ENCODE measurements at regions of chr20 and their contacts with region 1.

Region 1: DNA sequence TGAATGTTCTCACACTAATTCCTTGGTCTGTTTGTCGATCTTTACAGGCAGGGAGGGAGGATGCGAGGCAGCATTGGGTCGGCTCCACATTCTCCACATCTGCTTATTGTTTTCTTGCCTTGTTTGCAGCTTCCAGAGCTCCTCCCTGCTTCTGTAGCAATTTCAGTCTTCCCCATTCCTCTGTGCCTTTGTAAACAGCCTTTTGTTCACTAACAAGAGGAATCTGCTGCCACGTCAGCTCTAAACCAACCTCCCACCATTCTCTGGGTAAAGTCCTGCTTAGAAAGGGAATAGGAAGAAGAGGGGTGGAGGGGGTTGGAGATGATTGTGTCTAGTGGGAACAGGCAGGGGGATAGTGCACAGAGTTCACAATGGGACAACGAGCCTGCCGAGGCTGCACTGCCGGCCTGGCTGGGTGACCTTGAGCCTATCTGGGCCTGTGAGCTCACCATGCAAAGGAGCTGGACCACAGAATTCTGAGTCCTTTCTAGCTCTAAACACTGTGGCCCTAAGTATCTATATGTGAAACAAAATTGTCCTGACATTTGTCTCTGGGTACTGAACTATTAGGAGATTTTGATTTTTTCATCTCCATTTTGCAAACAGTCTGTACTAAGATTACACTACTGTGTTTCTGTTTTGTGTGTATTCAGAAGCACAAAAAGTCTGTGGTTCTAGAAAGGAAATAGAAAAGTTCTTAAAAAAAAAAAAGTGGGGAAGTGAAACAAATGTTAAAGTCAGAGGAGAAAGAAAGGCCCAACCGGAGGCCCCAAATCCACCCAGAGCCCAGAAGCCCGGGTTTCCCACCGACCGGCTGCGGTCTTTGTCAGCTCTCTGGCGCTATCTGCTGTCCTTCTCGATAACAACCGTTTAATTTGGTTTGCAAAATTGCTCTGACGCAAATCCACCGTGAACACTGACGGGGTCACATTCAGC is 1.4 kb upstream of the PRND start:
- DNase-seq: peak; percentile 63 to 76 (median 65)
- ATAC-seq: peak; percentile 89
- H3K4me3 ChIP-seq: no peak overlapping the region
- H3K27ac ChIP-seq: no peak overlapping the region
- H3K4me1 ChIP-seq: no peaks in the 10 kb centered on the region
- H3K27me3 ChIP-seq: peaks cover 4 to 37% of the 10 kb centered on the region in 2 experiments; a peak in 3 of 5 replicates
- CTCF ChIP-seq: peak; percentile 70 to 84 (median 83)
- EP300 ChIP-seq: no peak
- POLR2A ChIP-seq: no peak
- RAD21 ChIP-seq: peak; percentile 87 to 93

Region 2: DNA sequence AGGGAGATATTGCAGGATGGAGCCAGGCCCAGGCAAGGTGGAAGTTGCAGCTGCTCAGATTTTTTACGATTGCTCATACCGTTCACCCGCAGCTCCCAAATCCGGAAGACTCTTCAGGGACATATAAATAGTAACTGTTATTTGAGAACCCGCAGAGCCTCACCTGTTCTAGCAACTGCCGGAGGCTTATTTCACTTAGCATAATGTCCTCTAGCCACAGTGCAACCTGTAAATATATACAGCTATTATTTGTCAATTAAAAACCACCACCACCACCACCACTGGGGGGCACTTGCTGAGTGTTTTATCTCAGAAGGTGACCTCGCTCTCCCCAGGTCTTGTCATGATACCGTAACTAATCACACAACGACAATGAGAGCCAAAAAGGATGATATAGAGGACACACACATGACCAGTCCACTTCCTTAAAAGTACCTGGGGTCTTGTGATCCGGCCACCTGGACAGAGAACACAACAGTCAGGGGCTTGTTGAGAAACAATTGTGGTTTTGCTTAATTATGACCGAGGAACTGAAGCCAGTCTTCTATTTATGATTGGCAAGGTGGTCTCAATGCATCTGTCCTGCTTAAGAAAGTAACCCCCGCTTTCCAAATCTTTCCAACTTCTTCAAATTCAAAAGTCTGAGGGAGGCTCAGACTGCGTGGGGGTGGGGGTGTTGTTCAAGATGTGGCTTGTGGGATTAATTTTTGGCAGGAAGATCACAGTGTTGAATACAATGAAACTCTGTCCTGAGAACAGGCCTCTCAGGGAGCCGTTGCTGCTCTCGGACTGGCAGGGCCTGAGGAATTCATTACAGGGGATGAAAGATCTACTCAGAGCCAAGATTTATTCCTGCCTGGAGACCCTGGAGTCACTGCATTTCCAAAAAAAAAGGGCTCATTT is 106.3 kb before region 1 on chr20:
- CTCF ChIA-PET with region 1: interaction called, 51 read pairs
- POLR2A ChIA-PET with region 1: no interaction called
- in situ Hi-C with region 1: loop called (anchors 5 kb)
- intact Hi-C with region 1: loop called (anchors 1 kb)
- DNase-seq: peak; percentile 25 to 60 (median 40)
- ATAC-seq: peak; percentile 86
- H3K4me3 ChIP-seq: no peak overlapping the region
- H3K27ac ChIP-seq: no peak overlapping the region
- H3K4me1 ChIP-seq: no peaks in the 10 kb centered on the region; a peak in 2 of 5 replicates
- H3K27me3 ChIP-seq: 0 out of 5 replicates have a peak, but pooled peaks cover 0 to 4% of the 10 kb centered on the region in 2 experiments
- CTCF ChIP-seq: peak; percentile 53 to 75 (median 70); a peak in 5 of 6 replicates
- EP300 ChIP-seq: no peak
- POLR2A ChIP-seq: no peak
- RAD21 ChIP-seq: peak; percentile 77 to 89

Region 3: DNA sequence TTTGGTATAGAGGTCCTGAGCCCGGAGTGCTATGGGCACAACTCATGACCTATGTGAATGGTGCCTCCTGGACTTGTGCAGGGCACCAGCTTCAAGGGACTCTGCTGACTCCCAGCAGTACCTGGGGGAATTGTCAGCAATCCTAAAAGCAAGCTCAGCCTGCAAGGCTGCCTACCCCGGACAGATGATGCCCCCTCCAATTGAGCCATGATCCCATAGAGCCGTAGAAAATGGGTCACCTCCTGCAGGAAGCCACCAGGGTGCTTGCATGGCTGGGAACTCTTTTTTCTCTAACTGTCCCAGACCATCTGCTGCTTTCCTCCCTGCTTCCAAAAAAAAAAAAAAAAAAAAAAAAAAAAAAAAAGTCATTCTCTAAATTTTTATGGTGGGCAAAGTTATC is 11.5 kb before region 1 on chr20:
- CTCF ChIA-PET with region 1: no interaction called
- POLR2A ChIA-PET with region 1: no interaction called
- in situ Hi-C with region 1: no loop called
- intact Hi-C with region 1: no loop called
- DNase-seq: no peak
- ATAC-seq: no peak
- H3K4me3 ChIP-seq: no peak overlapping the region
- H3K27ac ChIP-seq: no peak overlapping the region
- H3K4me1 ChIP-seq: no peaks in the 10 kb centered on the region; a peak in 1 of 5 replicates
- H3K27me3 ChIP-seq: peaks cover 0 to 37% of the 10 kb centered on the region in 2 experiments; a peak in 4 of 5 replicates
- CTCF ChIP-seq: no peak
- EP300 ChIP-seq: no peak
- POLR2A ChIP-seq: no peak
- RAD21 ChIP-seq: no peak